ENCODE measurements at regions of chr3 and their contacts with region 1.

Region 1: GRCh38 chr3:15636003-15636709 is 34.6 kb downstream of the BTD start:
- DNase-seq: peak; percentile 65
- H3K4me3 Mint-ChIP-seq: peak overlapping the region; percentile 44
- H3K27ac Mint-ChIP-seq: peak overlapping the region; percentile 89
- H3K4me1 Mint-ChIP-seq: peaks cover 52% of the 10 kb centered on the region
- H3K27me3 Mint-ChIP-seq: no peaks in the 10 kb centered on the region

Region 2: GRCh38 chr3:15384510-15385237 is 251.5 kb before region 1 on chr3:
- CTCF ChIA-PET with region 1: no interaction called
- POLR2A ChIA-PET with region 1: no interaction called
- intact Hi-C with region 1: no loop called
- DNase-seq: no peak
- H3K4me3 Mint-ChIP-seq: no peak overlapping the region
- H3K27ac Mint-ChIP-seq: no peak overlapping the region
- H3K4me1 Mint-ChIP-seq: peaks cover 6% of the 10 kb centered on the region
- H3K27me3 Mint-ChIP-seq: no peaks in the 10 kb centered on the region

Region 3: GRCh38 chr3:15805756-15806266 is 169.7 kb after region 1 on chr3:
- CTCF ChIA-PET with region 1: interaction called, 10 read pairs
- POLR2A ChIA-PET with region 1: no interaction called
- intact Hi-C with region 1: loop called (anchors 1 kb)
- DNase-seq: no peak
- H3K4me3 Mint-ChIP-seq: no peak overlapping the region
- H3K27ac Mint-ChIP-seq: peak overlapping the region; percentile 23
- H3K4me1 Mint-ChIP-seq: peaks cover 72% of the 10 kb centered on the region
- H3K27me3 Mint-ChIP-seq: no peaks in the 10 kb centered on the region